Activated T-helper 2 cell treated with anti-CD3 and anti-CD28 coated beads, Interferon-gamma antibody, Interleukin-2, Interleukin-4, amounts not matched to agents 10 μg/mL and 5 μg/mL and 100 μg/mL, durations not matched to agents 14 hours and 24 hours and 36 hours (primary cell): ENCODE measurements at regions of chr12 and their contacts with region 1.

Region 1: DNA sequence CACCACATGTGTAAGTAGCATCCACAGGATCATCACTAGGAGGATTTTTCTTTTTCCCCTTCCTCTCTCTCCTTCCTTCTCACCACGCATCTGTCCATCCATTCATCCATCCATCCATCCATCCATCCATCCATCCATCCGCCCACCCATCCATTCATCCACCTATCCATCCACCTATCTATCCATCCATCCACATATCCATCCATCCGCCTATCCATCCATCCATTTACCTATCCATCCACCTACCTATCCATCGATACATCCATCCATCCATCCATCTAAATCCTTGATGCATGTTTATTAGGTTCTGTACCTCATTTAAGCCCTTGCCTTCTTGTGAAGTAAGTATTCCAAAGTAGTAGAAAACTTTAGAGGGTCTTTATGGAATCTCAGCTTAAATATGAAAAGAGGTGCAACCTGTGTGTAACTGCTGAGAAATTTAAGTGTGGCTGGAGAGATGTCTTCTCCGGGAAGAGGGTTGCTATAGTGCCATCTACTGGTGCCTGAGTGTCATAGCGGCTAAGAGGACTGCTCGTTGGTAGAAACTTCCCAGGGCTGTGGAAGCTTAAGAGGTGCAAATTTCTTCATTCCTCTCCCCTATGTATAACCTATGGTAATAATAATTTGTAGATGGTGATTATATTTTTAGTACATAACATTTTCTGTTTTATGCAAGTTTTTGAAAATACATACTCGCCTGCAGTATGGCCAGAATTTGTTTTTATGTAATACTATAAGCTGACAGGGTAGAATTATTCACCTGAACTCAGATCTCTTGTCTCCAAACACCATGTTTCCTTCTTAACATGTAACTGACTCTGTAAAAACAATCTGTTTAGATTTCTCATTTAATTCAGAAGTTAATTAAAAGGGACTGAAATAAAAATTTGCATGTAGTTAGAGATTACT is 46.0 kb downstream of the MYO1H start:
- DNase-seq: peak; percentile 12
- H3K4me3 Mint-ChIP-seq: no peak overlapping the region
- H3K27ac Mint-ChIP-seq: no peak overlapping the region
- H3K4me1 Mint-ChIP-seq: no peaks in the 10 kb centered on the region
- H3K27me3 Mint-ChIP-seq: peaks cover 16% of the 10 kb centered on the region

Region 2: DNA sequence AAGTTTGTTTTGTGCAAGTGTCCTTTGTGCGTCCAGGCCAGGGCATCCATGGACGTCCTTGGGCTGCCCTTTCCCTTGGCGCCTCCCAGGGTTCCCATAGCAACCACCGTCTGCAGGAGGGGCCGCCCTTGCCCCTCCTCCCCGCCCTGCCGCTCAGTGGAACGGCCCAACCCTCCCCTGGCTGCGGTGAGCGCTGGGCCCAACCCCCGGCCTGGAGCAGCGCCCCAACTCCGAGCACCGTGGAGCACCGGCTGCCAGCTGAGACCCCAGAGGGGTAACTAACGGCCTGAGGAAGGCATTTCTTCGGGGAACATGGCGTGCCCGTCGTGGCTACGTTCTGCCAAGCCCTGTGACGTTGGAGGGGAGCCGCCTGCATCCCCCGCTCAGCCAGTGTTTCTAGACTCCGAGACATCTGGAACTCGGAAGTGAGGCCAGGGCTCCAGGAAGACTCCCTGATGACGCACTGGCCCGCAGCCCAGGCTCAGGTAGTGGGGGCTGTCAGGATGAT is 282.6 kb before region 1 on chr12:
- intact Hi-C with region 1: loop called (anchors 5 kb)
- DNase-seq: peak; percentile 50
- H3K4me3 Mint-ChIP-seq: peak overlapping the region; percentile 68
- H3K27ac Mint-ChIP-seq: peak overlapping the region; percentile 52
- H3K4me1 Mint-ChIP-seq: peaks cover 13% of the 10 kb centered on the region
- H3K27me3 Mint-ChIP-seq: no peaks in the 10 kb centered on the region

Region 3: GRCh38 chr12:109264095-109264942 is 129.4 kb before region 1 on chr12:
- intact Hi-C with region 1: loop called (anchors 2 kb)
- DNase-seq: peak; percentile 20
- H3K4me3 Mint-ChIP-seq: no peak overlapping the region
- H3K27ac Mint-ChIP-seq: no peak overlapping the region
- H3K4me1 Mint-ChIP-seq: no peaks in the 10 kb centered on the region
- H3K27me3 Mint-ChIP-seq: no peaks in the 10 kb centered on the region

Region 4: GRCh38 chr12:110109037-110109836 is 715.5 kb after region 1 on chr12:
- intact Hi-C with region 1: no loop called
- DNase-seq: no peak
- H3K4me3 Mint-ChIP-seq: no peak overlapping the region
- H3K27ac Mint-ChIP-seq: no peak overlapping the region
- H3K4me1 Mint-ChIP-seq: peaks cover 2% of the 10 kb centered on the region
- H3K27me3 Mint-ChIP-seq: peaks cover 8% of the 10 kb centered on the region